CD4-positive, alpha-beta memory T cell (primary cell): ENCODE measurements at regions of chr17 and their contacts with region 1.

Region 1: GRCh38 chr17:42019509-42020404 is at the start of gene NKIRAS2:
- DNase-seq: peak; percentile 90 to 96 (median 90)
- H3K4me3 ChIP-seq: peak within 1 kb of the TSS; percentile 44 to 79
- H3K4me3 Mint-ChIP-seq: peak within 1 kb of the TSS; percentile 88 to 100 (median 96)
- H3K27ac ChIP-seq: peak within 1 kb of the TSS; percentile 84
- H3K27ac Mint-ChIP-seq: peak within 1 kb of the TSS; percentile 79 to 93 (median 88)
- H3K4me1 ChIP-seq: peaks cover 54% of the 10 kb centered on the region
- H3K4me1 Mint-ChIP-seq: peaks cover 34 to 66% (median 50%) of the 10 kb centered on the region in 4 donors
- H3K27me3 ChIP-seq: no peaks in the 10 kb centered on the region
- H3K27me3 Mint-ChIP-seq: no peaks in the 10 kb centered on the region
- total RNA-seq, gene NKIRAS2: 19.7 TPM

Region 2: GRCh38 chr17:41864836-41865595 is 154.7 kb before region 1 on chr17 and contains the start of gene KLHL11:
- CTCF ChIA-PET with region 1: interaction called, 3 read pairs
- POLR2A ChIA-PET with region 1: interaction called, 19 read pairs
- intact Hi-C with region 1: no loop called
- DNase-seq: peak; percentile 85 to 88 (median 87)
- H3K4me3 ChIP-seq: peak within 1 kb of the TSS; percentile 26 to 78
- H3K4me3 Mint-ChIP-seq: peak within 1 kb of the TSS in 1 of 8 donors; percentile 82
- H3K27ac ChIP-seq: peak within 1 kb of the TSS; percentile 71
- H3K27ac Mint-ChIP-seq: peak within 1 kb of the TSS in 3 of 7 donors; percentile 89 to 93 (median 92)
- H3K4me1 ChIP-seq: peaks cover 42% of the 10 kb centered on the region
- H3K4me1 Mint-ChIP-seq: peaks cover 11 to 37% (median 19%) of the 10 kb centered on the region in 4 donors
- H3K27me3 ChIP-seq: no peaks in the 10 kb centered on the region
- H3K27me3 Mint-ChIP-seq: no peaks in the 10 kb centered on the region
- total RNA-seq, gene KLHL11: 20.6 to 20.8 TPM

Region 3: DNA sequence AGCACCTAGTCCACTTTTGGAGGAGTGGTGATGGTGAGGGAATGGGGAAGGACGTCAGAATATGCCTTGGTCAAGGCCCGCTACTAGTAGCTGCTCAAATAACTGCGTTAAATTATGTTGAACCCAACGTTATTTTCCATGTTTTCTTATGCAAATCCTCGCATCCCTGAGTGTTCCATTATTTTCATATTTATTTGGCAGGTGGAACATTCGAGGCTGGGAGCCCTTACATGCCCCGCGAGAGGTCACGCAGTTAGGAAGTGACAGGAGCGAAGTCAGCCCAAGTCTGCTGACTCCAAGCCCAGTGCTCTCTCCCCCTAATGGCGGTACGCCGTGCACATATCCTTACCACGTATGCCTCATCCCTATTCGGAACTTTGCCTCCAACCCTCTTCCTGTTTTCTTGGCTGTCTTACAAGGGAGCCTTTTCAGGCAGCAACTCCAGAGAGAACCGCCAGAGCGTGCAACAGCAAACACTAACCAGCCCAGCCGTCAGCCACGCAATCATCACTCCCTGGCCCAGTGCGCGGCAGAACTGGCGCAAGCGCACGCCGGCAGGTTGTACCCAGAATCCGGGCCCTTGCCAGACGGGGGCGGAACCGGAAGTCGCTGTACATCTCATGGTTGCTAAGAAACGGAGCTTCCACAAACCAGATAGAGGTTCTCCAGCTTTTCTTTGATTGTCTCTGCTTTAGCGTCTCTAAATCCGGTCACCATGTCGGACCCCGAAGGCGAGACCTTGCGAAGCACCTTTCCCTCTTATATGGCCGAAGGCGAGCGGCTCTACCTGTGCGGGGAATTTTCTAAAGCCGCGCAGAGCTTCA is 89.5 kb before region 1 on chr17 and contains the start of gene ODAD4:
- CTCF ChIA-PET with region 1: interaction called, 7 read pairs
- POLR2A ChIA-PET with region 1: interaction called, 6 read pairs
- intact Hi-C with region 1: loop called (anchors 1 kb)
- DNase-seq: peak; percentile 94 to 98 (median 98)
- H3K4me3 ChIP-seq: peak within 1 kb of the TSS; percentile 73 to 80
- H3K4me3 Mint-ChIP-seq: peak within 1 kb of the TSS; percentile 90 to 99 (median 98)
- H3K27ac ChIP-seq: peak within 1 kb of the TSS; percentile 85
- H3K27ac Mint-ChIP-seq: peak within 1 kb of the TSS; percentile 91 to 100 (median 99)
- H3K4me1 ChIP-seq: peaks cover 23% of the 10 kb centered on the region
- H3K4me1 Mint-ChIP-seq: peaks cover 16 to 35% (median 23%) of the 10 kb centered on the region in 4 donors
- H3K27me3 ChIP-seq: no peaks in the 10 kb centered on the region
- H3K27me3 Mint-ChIP-seq: no peaks in the 10 kb centered on the region
- total RNA-seq, gene ODAD4: 0.20 TPM in 1 of 2 experiments, not detected in the other

Region 4: GRCh38 chr17:41982026-41982760 is 37.6 kb before region 1 on chr17:
- CTCF ChIA-PET with region 1: no interaction called
- POLR2A ChIA-PET with region 1: no interaction called
- intact Hi-C with region 1: no loop called
- DNase-seq: no peak
- H3K4me3 ChIP-seq: no peak overlapping the region
- H3K4me3 Mint-ChIP-seq: no peak overlapping the region
- H3K27ac ChIP-seq: no peak overlapping the region
- H3K27ac Mint-ChIP-seq: peak overlapping the region in 5 of 7 donors; percentile 29 to 80 (median 53)
- H3K4me1 ChIP-seq: no peaks in the 10 kb centered on the region
- H3K4me1 Mint-ChIP-seq: peaks cover 0 to 5% (median 2%) of the 10 kb centered on the region in 4 donors
- H3K27me3 ChIP-seq: no peaks in the 10 kb centered on the region
- H3K27me3 Mint-ChIP-seq: no peaks in the 10 kb centered on the region

Region 5: GRCh38 chr17:42034059-42034458 is 14.3 kb after region 1 on chr17:
- CTCF ChIA-PET with region 1: interaction called, 17 read pairs
- POLR2A ChIA-PET with region 1: interaction called, 3 read pairs
- intact Hi-C with region 1: no loop called
- DNase-seq: no peak
- H3K4me3 ChIP-seq: no peak overlapping the region
- H3K4me3 Mint-ChIP-seq: no peak overlapping the region
- H3K27ac ChIP-seq: no peak overlapping the region
- H3K27ac Mint-ChIP-seq: peak overlapping the region in 1 of 7 donors; percentile 14
- H3K4me1 ChIP-seq: no peaks in the 10 kb centered on the region
- H3K4me1 Mint-ChIP-seq: peaks cover 0 to 2% (median 0%) of the 10 kb centered on the region in 4 donors
- H3K27me3 ChIP-seq: no peaks in the 10 kb centered on the region
- H3K27me3 Mint-ChIP-seq: peaks cover 2 to 17% of the 10 kb centered on the region in 2 donors

Region 6: GRCh38 chr17:42087736-42088705 is 68.3 kb after region 1 on chr17:
- CTCF ChIA-PET with region 1: no interaction called
- POLR2A ChIA-PET with region 1: no interaction called
- intact Hi-C with region 1: no loop called
- DNase-seq: no peak
- H3K4me3 ChIP-seq: no peak overlapping the region
- H3K4me3 Mint-ChIP-seq: no peak overlapping the region
- H3K27ac ChIP-seq: no peak overlapping the region
- H3K27ac Mint-ChIP-seq: no peak overlapping the region
- H3K4me1 ChIP-seq: no peaks in the 10 kb centered on the region
- H3K4me1 Mint-ChIP-seq: no peaks in the 10 kb centered on the region
- H3K27me3 ChIP-seq: no peaks in the 10 kb centered on the region
- H3K27me3 Mint-ChIP-seq: peaks cover 6 to 12% of the 10 kb centered on the region in 2 donors

Region 7: GRCh38 chr17:42112552-42113176 is 92.9 kb after region 1 on chr17 and contains the start of gene DHX58:
- CTCF ChIA-PET with region 1: interaction called, 58 read pairs
- POLR2A ChIA-PET with region 1: interaction called, 45 read pairs
- intact Hi-C with region 1: no loop called
- DNase-seq: peak; percentile 81 to 87 (median 84)
- H3K4me3 ChIP-seq: peak within 1 kb of the TSS; percentile 76 to 86
- H3K4me3 Mint-ChIP-seq: peak within 1 kb of the TSS; percentile 87 to 95 (median 92)
- H3K27ac ChIP-seq: peak within 1 kb of the TSS; percentile 88
- H3K27ac Mint-ChIP-seq: peak within 1 kb of the TSS; percentile 92 to 98 (median 98)
- H3K4me1 ChIP-seq: peaks cover 37% of the 10 kb centered on the region
- H3K4me1 Mint-ChIP-seq: peaks cover 24 to 64% (median 46%) of the 10 kb centered on the region in 4 donors
- H3K27me3 ChIP-seq: no peaks in the 10 kb centered on the region
- H3K27me3 Mint-ChIP-seq: no peaks in the 10 kb centered on the region
- total RNA-seq, gene DHX58: 41.8 to 43.3 TPM

Region 8: DNA sequence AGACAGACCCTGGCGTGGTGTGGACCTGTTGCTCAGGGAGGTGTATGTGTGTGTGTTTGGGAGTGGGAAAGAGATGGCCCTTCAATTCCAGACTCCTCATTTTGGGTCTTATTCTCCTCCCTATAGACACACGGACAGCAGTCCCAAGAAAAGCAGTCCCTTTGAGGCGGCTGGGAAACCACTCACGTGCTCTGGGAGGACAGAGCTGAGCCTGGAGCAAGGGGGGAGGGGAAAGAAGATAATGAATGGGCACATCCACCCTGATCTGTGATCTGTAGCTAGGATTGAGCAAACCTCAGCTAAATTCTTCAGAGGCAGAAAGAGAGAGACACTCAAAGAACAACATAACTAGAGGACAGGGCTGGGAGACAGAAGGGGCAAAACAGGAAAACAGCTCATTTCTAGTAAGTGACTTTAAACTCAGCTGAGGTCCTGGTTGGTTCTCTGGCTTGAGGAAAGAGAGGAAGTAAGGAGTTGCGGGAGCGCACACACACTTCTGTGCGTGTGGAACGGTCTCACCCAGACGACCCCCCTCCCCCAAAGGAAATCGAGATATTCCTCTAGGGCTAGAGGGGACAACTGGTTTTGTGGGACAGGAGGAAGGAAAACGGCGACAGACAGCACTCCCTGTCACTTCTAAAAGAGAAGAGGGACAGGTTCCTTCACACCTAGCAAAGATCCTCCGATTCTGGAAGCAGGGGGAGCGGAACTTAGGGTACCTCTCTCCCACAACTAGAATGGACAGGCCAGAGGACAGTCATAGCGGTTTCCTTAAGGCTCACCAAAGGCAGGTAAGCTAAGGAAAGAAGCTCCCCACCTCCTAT is 134.4 kb after region 1 on chr17:
- CTCF ChIA-PET with region 1: interaction called, 5 read pairs
- POLR2A ChIA-PET with region 1: interaction called, 3 read pairs
- intact Hi-C with region 1: loop called (anchors 1 kb)
- DNase-seq: no peak
- H3K4me3 ChIP-seq: peak overlapping the region; percentile 86 to 96
- H3K4me3 Mint-ChIP-seq: peak overlapping the region; percentile 89 to 98 (median 94)
- H3K27ac ChIP-seq: peak overlapping the region; percentile 96
- H3K27ac Mint-ChIP-seq: peak overlapping the region; percentile 82 to 98 (median 96)
- H3K4me1 ChIP-seq: peaks cover 42% of the 10 kb centered on the region
- H3K4me1 Mint-ChIP-seq: peaks cover 24 to 49% (median 37%) of the 10 kb centered on the region in 4 donors
- H3K27me3 ChIP-seq: no peaks in the 10 kb centered on the region
- H3K27me3 Mint-ChIP-seq: no peaks in the 10 kb centered on the region